Activated CD8-positive, alpha-beta T cell treated with anti-CD3 and anti-CD28 coated beads for 36 hours (primary cell): ENCODE measurements at regions of chr4 and their contacts with region 1.

Region 1: GRCh38 chr4:9691238-9692065 is 90.0 kb upstream of the DRD5 start:
- DNase-seq: peak; percentile 94
- ATAC-seq: peak; percentile 100
- H3K4me3 Mint-ChIP-seq: peak overlapping the region; percentile 75
- H3K27ac Mint-ChIP-seq: peak overlapping the region; percentile 86
- H3K4me1 Mint-ChIP-seq: peaks cover 22% of the 10 kb centered on the region
- H3K27me3 Mint-ChIP-seq: peaks cover 2% of the 10 kb centered on the region
- CTCF ChIP-seq: no peak

Region 2: GRCh38 chr4:9679704-9680478 is 11.6 kb before region 1 on chr4:
- CTCF ChIA-PET with region 1: no interaction called
- POLR2A ChIA-PET with region 1: no interaction called
- intact Hi-C with region 1: no loop called
- DNase-seq: no peak
- ATAC-seq: no peak
- H3K4me3 Mint-ChIP-seq: no peak overlapping the region
- H3K27ac Mint-ChIP-seq: no peak overlapping the region
- H3K4me1 Mint-ChIP-seq: no peaks in the 10 kb centered on the region
- H3K27me3 Mint-ChIP-seq: no peaks in the 10 kb centered on the region
- CTCF ChIP-seq: no peak

Region 3: GRCh38 chr4:9704551-9705332 is 13.3 kb after region 1 on chr4:
- CTCF ChIA-PET with region 1: interaction called, 16 read pairs
- POLR2A ChIA-PET with region 1: no interaction called
- intact Hi-C with region 1: no loop called
- DNase-seq: no peak
- ATAC-seq: no peak
- H3K4me3 Mint-ChIP-seq: no peak overlapping the region
- H3K27ac Mint-ChIP-seq: no peak overlapping the region
- H3K4me1 Mint-ChIP-seq: peaks cover 10% of the 10 kb centered on the region
- H3K27me3 Mint-ChIP-seq: no peaks in the 10 kb centered on the region
- CTCF ChIP-seq: no peak